Prostate gland (tissue), 2 donors: ENCODE measurements at regions of chr17 and their contacts with region 1.

Region 1: GRCh38 chr17:21368545-21369246 is 7.5 kb upstream of the KCNJ12 start:
- DNase-seq: no peak
- H3K4me3 ChIP-seq: no peak overlapping the region
- H3K27ac ChIP-seq: no peak overlapping the region
- H3K4me1 ChIP-seq: no peaks in the 10 kb centered on the region
- H3K27me3 ChIP-seq: no peaks in the 10 kb centered on the region
- CTCF ChIP-seq: no peak
- POLR2A ChIP-seq: no peak

Region 2: GRCh38 chr17:20787281-20787680 is 581.4 kb before region 1 on chr17:
- intact Hi-C with region 1: no loop called
- DNase-seq: no peak
- H3K4me3 ChIP-seq: no peak overlapping the region
- H3K27ac ChIP-seq: no peak overlapping the region
- H3K4me1 ChIP-seq: no peaks in the 10 kb centered on the region
- H3K27me3 ChIP-seq: no peaks in the 10 kb centered on the region
- CTCF ChIP-seq: no peak
- POLR2A ChIP-seq: no peak

Region 3: GRCh38 chr17:21419299-21420239 is 50.9 kb after region 1 on chr17:
- intact Hi-C with region 1: loop called (anchors 10 kb)
- DNase-seq: no peak
- H3K4me3 ChIP-seq: no peak overlapping the region
- H3K27ac ChIP-seq: no peak overlapping the region
- H3K4me1 ChIP-seq: no peaks in the 10 kb centered on the region
- H3K27me3 ChIP-seq: no peaks in the 10 kb centered on the region
- CTCF ChIP-seq: no peak
- POLR2A ChIP-seq: no peak